Naive thymus-derived CD4-positive, alpha-beta T cell (primary cell): ENCODE measurements at regions of chr10 and their contacts with region 1.

Region 1: GRCh38 chr10:53379956-53380355 is 607.4 kb upstream of the MBL2 start:
- DNase-seq: no peak
- ATAC-seq: no peak
- H3K4me3 ChIP-seq: no peak overlapping the region
- H3K4me3 Mint-ChIP-seq: no peak overlapping the region
- H3K27ac ChIP-seq: no peak overlapping the region
- H3K27ac Mint-ChIP-seq: no peak overlapping the region
- H3K4me1 ChIP-seq: no peaks in the 10 kb centered on the region
- H3K4me1 Mint-ChIP-seq: no peaks in the 10 kb centered on the region
- H3K27me3 ChIP-seq: no peaks in the 10 kb centered on the region
- H3K27me3 Mint-ChIP-seq: no peaks in the 10 kb centered on the region

Region 2: GRCh38 chr10:53298443-53298842 is 81.5 kb before region 1 on chr10:
- CTCF ChIA-PET with region 1: no interaction called
- POLR2A ChIA-PET with region 1: no interaction called
- intact Hi-C with region 1: loop called in 1 of 2 experiments (anchors 10 kb)
- DNase-seq: no peak
- ATAC-seq: no peak
- H3K4me3 ChIP-seq: no peak overlapping the region
- H3K4me3 Mint-ChIP-seq: no peak overlapping the region
- H3K27ac ChIP-seq: no peak overlapping the region
- H3K27ac Mint-ChIP-seq: no peak overlapping the region
- H3K4me1 ChIP-seq: no peaks in the 10 kb centered on the region
- H3K4me1 Mint-ChIP-seq: no peaks in the 10 kb centered on the region
- H3K27me3 ChIP-seq: no peaks in the 10 kb centered on the region
- H3K27me3 Mint-ChIP-seq: no peaks in the 10 kb centered on the region

Region 3: DNA sequence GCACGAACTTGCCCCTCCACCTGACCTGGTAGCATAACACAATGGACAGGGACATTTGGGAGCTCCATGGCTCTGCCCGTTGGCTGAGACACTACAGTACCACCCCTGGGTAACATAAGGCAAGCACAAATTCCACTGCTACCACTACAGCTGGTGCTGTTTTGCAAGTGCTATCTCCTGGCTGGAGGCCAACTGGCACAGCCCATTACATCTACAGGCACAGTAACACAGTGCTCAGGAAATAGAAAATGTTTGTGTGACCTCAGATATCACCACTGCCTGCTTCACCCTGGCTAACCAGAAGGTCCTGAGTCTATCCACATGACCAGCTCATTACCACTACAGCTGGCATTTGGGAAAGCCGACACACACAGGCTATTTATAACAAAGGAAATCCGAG is 23.7 kb after region 1 on chr10:
- CTCF ChIA-PET with region 1: no interaction called
- POLR2A ChIA-PET with region 1: no interaction called
- intact Hi-C with region 1: no loop called
- DNase-seq: no peak
- ATAC-seq: no peak
- H3K4me3 ChIP-seq: no peak overlapping the region
- H3K4me3 Mint-ChIP-seq: no peak overlapping the region
- H3K27ac ChIP-seq: no peak overlapping the region
- H3K27ac Mint-ChIP-seq: no peak overlapping the region
- H3K4me1 ChIP-seq: no peaks in the 10 kb centered on the region
- H3K4me1 Mint-ChIP-seq: no peaks in the 10 kb centered on the region
- H3K27me3 ChIP-seq: no peaks in the 10 kb centered on the region
- H3K27me3 Mint-ChIP-seq: no peaks in the 10 kb centered on the region